Tibial artery (tissue), 4 donors: ENCODE measurements at regions of chr6 and their contacts with region 1.

Region 1: DNA sequence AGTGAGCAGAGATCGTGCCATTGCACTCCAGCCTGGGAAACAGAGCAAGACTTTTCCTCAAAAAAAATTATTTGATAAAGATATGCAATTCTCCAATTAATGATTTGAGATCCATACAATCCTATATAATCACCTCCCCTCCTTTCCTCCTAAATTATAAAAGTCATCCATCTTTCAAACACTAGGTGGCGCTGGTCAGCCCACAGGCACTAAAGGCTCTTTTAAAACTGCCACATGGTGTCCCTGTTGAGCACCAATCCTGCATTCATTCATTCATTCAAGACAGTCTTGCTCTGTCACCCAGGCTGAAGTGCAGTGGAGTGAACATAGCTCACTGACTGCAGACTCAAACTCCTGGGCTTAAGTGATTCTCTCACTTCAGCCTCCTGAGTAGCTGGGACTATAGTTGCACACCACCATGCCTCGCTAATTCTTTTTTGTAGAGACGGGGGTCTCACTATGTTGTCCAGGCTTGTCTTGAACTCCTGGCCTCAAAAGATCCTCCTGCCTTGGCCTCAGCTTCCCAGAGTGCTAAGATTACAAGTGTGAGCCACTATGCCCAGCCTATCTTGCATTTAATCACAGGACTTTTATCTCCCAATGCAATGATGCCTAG is 58.7 kb upstream of the SLC2A12 start:
- DNase-seq: no peak
- H3K4me3 ChIP-seq: no peak overlapping the region
- H3K27ac ChIP-seq: no peak overlapping the region
- H3K4me1 ChIP-seq: no peaks in the 10 kb centered on the region
- H3K27me3 ChIP-seq: peaks cover 0 to 11% of the 10 kb centered on the region in 2 donors
- CTCF ChIP-seq: peak; percentile 52 to 56

Region 2: GRCh38 chr6:134235937-134236751 is 125.0 kb after region 1 on chr6:
- intact Hi-C with region 1: no loop called
- DNase-seq: no peak
- H3K4me3 ChIP-seq: no peak overlapping the region
- H3K27ac ChIP-seq: no peak overlapping the region
- H3K4me1 ChIP-seq: peaks cover 0 to 18% (median 3%) of the 10 kb centered on the region in 4 donors
- H3K27me3 ChIP-seq: no peaks in the 10 kb centered on the region
- CTCF ChIP-seq: no peak

Region 3: DNA sequence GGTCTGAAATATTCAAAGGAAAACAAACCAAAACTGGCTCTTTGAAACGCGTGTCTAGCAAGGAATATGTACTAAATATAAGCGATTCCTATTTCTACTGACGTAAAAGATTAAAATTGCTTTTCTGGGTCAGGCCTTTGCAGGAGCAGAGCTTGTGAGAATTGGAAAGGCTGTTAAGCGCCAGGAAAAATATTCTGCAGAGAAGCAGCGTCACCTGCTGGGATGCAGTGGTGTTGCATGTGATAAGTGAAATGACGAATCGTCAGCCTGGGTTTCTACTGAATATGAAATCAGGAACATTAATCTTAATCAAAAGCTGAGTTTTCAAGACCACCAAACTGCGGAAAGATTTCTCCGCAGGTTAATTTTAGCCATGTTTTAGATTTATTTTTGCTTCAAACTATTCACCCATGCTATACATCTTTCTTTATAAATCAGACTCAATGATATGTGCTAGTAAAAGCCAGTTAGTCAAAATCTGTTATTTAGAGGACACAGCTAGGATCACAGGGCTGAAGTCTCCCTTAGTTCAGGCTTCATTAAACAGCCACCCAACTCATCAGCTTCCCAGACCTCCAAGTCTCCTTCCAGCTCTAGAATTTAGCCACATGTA is 771.4 kb after region 1 on chr6:
- intact Hi-C with region 1: loop called (anchors 10 kb)
- DNase-seq: peak; percentile 66 to 77
- H3K4me3 ChIP-seq: no peak overlapping the region
- H3K27ac ChIP-seq: no peak overlapping the region
- H3K4me1 ChIP-seq: peaks cover 0 to 7% (median 0%) of the 10 kb centered on the region in 4 donors
- H3K27me3 ChIP-seq: no peaks in the 10 kb centered on the region
- CTCF ChIP-seq: peak; percentile 95 to 96